BJ (cell line): ENCODE measurements at regions of chr12 and their contacts with region 1.

Region 1: GRCh38 chr12:22334410-22335290 is at the start of gene ST8SIA1:
- DNase-seq: no peak
- H3K4me3 ChIP-seq: peak within 1 kb of the TSS; percentile 26
- H3K27me3 ChIP-seq: peaks cover 23% of the 10 kb centered on the region
- CTCF ChIP-seq: no peak
- polyA plus RNA-seq, gene ST8SIA1: not detected in 2 replicates

Region 2: DNA sequence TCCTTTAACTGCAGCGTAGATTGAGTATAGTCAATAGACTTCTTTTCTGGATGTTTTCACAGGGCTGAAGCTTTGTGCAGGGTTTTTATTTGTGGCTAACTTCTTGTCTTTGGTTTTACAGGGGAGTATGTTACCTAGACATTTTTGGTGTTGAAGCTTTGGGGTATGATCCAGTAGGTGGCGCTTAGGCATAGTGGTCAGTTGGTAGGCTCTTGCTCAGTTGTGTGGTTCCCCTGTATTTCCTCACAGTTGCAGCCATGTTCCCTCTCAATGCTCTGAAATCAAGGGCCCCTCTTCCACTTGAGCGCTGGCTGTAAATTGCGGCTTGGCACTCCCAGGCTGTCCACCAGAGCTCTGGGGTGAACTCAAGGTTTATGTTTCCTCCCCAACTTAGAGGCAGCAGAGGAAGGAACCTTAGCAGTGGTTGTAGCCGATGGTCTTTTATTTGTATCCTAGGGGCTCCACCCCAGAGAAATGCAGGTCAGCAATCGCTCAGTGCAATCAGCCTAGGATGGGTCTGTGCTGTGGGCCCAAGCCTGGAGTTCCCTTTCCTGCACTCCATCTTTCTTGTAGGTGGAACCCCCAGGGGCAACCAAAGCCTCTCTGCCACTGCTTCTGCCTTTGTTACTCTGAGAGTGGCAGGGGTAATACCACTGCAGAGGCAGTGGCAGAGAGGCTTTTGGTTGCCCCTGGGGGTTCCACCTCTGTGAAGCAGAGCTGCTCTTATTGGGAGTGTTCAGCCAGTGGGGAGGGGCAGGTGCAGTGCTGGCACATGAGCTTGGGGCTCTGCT is 233.5 kb before region 1 on chr12:
- CTCF ChIA-PET with region 1: interaction called, 14 read pairs
- POLR2A ChIA-PET with region 1: no interaction called
- DNase-seq: no peak
- H3K4me3 ChIP-seq: no peak overlapping the region
- H3K27me3 ChIP-seq: no peaks in the 10 kb centered on the region
- CTCF ChIP-seq: peak; percentile 56

Region 3: DNA sequence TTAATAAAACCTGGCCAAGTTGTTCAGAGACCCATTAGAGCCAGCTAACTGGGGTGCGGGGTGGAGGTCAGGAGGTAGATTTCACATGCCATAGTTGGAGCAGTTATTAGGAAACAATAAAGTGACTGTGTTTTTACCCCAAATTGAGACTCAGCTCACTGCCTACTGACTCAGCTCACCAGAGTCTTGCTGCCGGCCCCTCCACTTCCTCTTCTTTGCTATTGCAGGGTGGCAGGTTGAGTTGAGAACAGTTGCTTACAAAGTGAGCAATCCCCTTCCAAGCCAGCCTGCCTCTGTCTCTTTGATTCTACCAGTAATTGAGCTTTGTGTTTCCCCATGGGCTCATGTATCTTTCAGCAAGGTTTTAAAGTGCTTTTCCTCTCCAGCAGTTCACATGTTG is 13.0 kb before region 1 on chr12:
- CTCF ChIA-PET with region 1: no interaction called
- POLR2A ChIA-PET with region 1: no interaction called
- DNase-seq: no peak
- H3K4me3 ChIP-seq: no peak overlapping the region
- H3K27me3 ChIP-seq: no peaks in the 10 kb centered on the region
- CTCF ChIP-seq: no peak